ENCODE measurements at regions of chr7 and their contacts with region 1.

Region 1: DNA sequence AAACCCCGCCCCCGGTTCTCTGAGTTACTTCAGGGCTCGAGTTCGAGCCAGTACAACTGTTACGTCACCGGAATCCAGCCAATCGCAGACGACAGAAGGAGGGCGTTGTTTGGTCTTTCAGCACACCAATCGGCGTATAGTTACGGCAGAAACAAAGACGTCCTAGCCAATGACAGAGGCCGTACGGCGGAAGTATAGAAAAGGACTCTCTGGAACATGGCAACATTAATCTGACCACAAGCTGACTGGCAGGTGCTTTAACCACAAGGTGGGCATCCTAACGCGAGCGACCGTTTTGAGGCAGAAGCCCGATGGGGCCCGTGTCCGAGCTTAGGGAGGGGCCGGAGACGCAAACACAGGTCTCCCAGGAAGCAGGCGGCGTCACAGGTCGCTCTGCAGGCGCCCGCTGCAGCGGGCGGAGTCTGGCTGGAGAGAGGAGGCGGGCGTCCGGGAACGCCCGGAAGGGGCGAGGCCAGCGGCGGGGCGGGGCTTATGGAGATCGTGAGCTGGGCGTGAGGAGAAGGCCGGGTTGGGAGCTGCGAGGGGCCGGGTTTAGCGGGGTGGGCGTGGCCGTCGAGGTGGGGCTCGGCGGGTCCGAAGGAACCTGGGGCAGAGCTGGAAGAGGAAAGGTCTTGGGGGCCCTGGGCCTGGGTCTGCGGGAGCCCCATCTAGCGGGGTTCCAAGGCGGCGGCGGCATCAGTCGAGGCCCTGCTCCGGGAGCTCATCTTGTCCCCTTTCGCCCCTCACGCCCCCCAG is at the start of gene MOSPD3:
- DNase-seq: peak; percentile 100
- H3K4me3 ChIP-seq: peak within 1 kb of the TSS; percentile 18 to 57 (median 56)
- H3K27ac ChIP-seq: peak within 1 kb of the TSS; percentile 46
- H3K4me1 ChIP-seq: peaks cover 10% of the 10 kb centered on the region
- H3K27me3 ChIP-seq: no peaks in the 10 kb centered on the region
- CTCF ChIP-seq: no peak
- POLR2A ChIP-seq: peak; percentile 69
- total RNA-seq, gene MOSPD3: 24.2 and 24.4 TPM in 2 replicates

Region 2: DNA sequence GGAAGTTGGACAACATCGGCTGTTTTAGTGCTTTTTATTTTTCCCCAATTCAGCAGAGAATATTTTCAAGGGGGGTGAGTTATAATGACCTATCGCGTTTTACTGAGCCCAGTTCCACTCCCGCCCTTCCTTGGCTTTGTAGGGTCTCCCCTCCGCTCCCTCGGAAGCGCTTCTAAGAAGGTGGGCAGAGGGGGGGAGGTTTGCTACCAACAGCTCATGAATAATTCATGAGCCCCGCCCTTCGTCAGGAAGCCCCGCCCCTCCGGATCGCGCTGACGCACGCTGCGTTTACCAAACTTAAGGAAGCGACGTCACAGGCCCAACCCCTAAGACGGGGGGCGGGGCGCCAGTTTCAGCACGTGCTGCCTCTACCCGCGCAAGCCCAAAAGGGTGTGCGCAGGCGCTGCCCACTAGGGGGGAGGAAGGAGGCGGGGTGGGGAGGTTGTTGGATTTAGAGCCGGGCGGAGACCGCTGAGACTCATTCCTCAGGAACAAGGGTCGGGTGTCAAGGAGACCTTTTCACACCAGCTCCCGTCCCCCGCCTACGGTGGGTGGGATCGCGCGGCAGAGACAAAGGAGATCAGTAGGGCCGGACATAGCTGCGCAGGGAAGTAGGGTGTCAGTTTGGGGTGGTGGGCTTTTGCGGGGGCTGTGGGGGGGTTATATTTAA is 183.1 kb before region 1 on chr7:
- CTCF ChIA-PET with region 1: no interaction called
- POLR2A ChIA-PET with region 1: interaction called, 10 read pairs
- dilution Hi-C with region 1: no loop called
- intact Hi-C with region 1: no loop called
- DNase-seq: peak; percentile 100
- H3K4me3 ChIP-seq: peak overlapping the region; percentile 55 to 80 (median 69)
- H3K27ac ChIP-seq: peak overlapping the region; percentile 89
- H3K4me1 ChIP-seq: peaks cover 19% of the 10 kb centered on the region
- H3K27me3 ChIP-seq: no peaks in the 10 kb centered on the region
- CTCF ChIP-seq: no peak
- POLR2A ChIP-seq: peak; percentile 92

Region 3: GRCh38 chr7:100483101-100483721 is 128.9 kb before region 1 on chr7:
- CTCF ChIA-PET with region 1: no interaction called
- POLR2A ChIA-PET with region 1: no interaction called
- dilution Hi-C with region 1: no loop called
- intact Hi-C with region 1: no loop called
- DNase-seq: peak; percentile 39
- H3K4me3 ChIP-seq: peak overlapping the region; percentile 29 to 60 (median 37)
- H3K27ac ChIP-seq: no peak overlapping the region
- H3K4me1 ChIP-seq: peaks cover 15% of the 10 kb centered on the region
- H3K27me3 ChIP-seq: no peaks in the 10 kb centered on the region
- CTCF ChIP-seq: peak; percentile 87 to 99
- POLR2A ChIP-seq: no peak

Region 4: GRCh38 chr7:100538654-100539435 is 73.3 kb before region 1 on chr7 and contains the start of gene AGFG2:
- CTCF ChIA-PET with region 1: no interaction called
- POLR2A ChIA-PET with region 1: no interaction called
- dilution Hi-C with region 1: no loop called
- intact Hi-C with region 1: loop called (anchors 2 kb)
- DNase-seq: peak; percentile 100
- H3K4me3 ChIP-seq: peak within 1 kb of the TSS; percentile 43 to 96 (median 45)
- H3K27ac ChIP-seq: peak within 1 kb of the TSS; percentile 0
- H3K4me1 ChIP-seq: peaks cover 13% of the 10 kb centered on the region
- H3K27me3 ChIP-seq: no peaks in the 10 kb centered on the region
- CTCF ChIP-seq: no peak
- POLR2A ChIP-seq: peak; percentile 67
- total RNA-seq, gene AGFG2: 36.3 and 44.6 TPM in 2 replicates

Region 5: GRCh38 chr7:100626530-100627237 is 14.5 kb after region 1 on chr7:
- CTCF ChIA-PET with region 1: interaction called, 21 read pairs
- POLR2A ChIA-PET with region 1: no interaction called
- dilution Hi-C with region 1: no loop called
- intact Hi-C with region 1: loop called (anchors 1 kb)
- DNase-seq: peak; percentile 83
- H3K4me3 ChIP-seq: peak overlapping the region in 1 of 3 experiments; percentile 16
- H3K27ac ChIP-seq: no peak overlapping the region
- H3K4me1 ChIP-seq: peaks cover 3% of the 10 kb centered on the region
- H3K27me3 ChIP-seq: no peaks in the 10 kb centered on the region
- CTCF ChIP-seq: no peak
- POLR2A ChIP-seq: no peak

Region 6: GRCh38 chr7:100632951-100633717 is 21.0 kb after region 1 on chr7:
- CTCF ChIA-PET with region 1: interaction called, 21 read pairs
- POLR2A ChIA-PET with region 1: no interaction called
- dilution Hi-C with region 1: no loop called
- intact Hi-C with region 1: no loop called
- DNase-seq: no peak
- H3K4me3 ChIP-seq: peak overlapping the region; percentile 16 to 34 (median 27)
- H3K27ac ChIP-seq: no peak overlapping the region
- H3K4me1 ChIP-seq: peaks cover 5% of the 10 kb centered on the region
- H3K27me3 ChIP-seq: peaks cover 2 to 7% of the 10 kb centered on the region in 2 experiments
- CTCF ChIP-seq: peak; percentile 35 to 56
- POLR2A ChIP-seq: no peak